GM10248 (cell line): ENCODE measurements at regions of chr4 and their contacts with region 1.

Region 1: DNA sequence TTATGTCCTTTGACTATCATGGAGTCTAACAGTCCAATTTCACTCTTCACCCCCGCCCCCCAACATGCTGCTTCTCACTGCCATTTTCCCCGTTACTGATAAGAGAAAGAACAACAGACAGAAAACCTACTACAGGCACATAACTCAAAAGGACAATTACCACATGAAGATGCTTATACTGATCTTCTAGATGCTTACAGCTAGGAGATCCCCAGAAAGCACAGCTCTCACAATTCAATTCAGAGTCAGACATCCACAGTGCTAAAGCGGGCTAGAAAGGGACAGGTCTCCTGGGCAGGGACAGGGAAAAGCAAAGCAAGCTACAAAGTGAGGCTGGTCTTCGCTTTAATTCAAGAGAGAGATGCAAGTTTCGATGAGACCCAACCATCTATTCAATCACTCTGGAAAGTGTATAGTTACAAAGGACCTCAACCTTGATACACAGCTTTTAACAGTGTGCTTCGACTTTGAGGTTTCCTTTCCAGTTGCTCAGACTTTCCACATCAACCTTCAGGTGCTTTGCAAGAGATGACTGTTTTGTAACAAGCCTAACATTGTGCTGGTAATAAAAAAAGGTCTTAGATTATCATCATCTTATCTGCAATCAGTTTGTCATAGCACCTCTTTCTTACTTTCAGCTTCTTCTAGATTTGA is 60.9 kb downstream of the LEF1 start:
- DNase-seq: no peak
- CTCF ChIP-seq: no peak

Region 2: DNA sequence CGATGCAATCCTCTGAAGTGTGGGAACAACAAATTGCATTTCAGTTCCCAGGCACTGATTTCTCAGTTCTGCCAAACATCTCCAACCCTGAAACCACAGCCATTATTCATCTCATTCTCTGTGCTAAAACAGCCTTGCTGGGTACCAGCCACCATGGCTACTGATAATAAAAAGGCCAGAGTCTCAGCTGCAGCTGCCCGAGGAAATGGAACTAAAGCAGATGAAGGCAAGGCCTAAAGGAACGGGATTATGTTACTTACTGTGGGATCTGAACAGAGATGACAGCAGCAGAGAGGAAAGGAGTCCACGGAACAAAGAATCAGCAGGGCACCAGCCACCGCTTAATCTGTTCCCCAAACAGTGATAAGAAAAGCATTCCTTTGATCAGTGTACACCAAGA is 543.5 kb before region 1 on chr4:
- CTCF ChIA-PET with region 1: no interaction called
- POLR2A ChIA-PET with region 1: no interaction called
- DNase-seq: no peak
- CTCF ChIP-seq: no peak

Region 3: GRCh38 chr4:108094923-108095482 is 12.9 kb before region 1 on chr4:
- CTCF ChIA-PET with region 1: interaction called, 11 read pairs
- POLR2A ChIA-PET with region 1: no interaction called
- DNase-seq: no peak
- CTCF ChIP-seq: no peak